Activated CD4-positive, alpha-beta T cell treated with anti-CD3 and anti-CD28 coated beads for 36 hours (primary cell): ENCODE measurements at regions of chr7 and their contacts with region 1.

Region 1: GRCh38 chr7:44123190-44124003 is at the start of gene POLD2:
- DNase-seq: peak; percentile 99
- ATAC-seq: peak; percentile 100
- H3K4me3 Mint-ChIP-seq: peak within 1 kb of the TSS; percentile 86
- H3K27ac Mint-ChIP-seq: peak within 1 kb of the TSS; percentile 89
- H3K4me1 Mint-ChIP-seq: peaks cover 42% of the 10 kb centered on the region
- H3K27me3 Mint-ChIP-seq: no peaks in the 10 kb centered on the region
- total RNA-seq, gene POLD2: 250 to 347 TPM

Region 2: GRCh38 chr7:44044315-44045225 is 78.8 kb before region 1 on chr7 and contains the start of gene DBNL:
- CTCF ChIA-PET with region 1: no interaction called
- POLR2A ChIA-PET with region 1: no interaction called
- intact Hi-C with region 1: loop called (anchors 1 to 2 kb)
- DNase-seq: peak; percentile 95
- ATAC-seq: peak; percentile 72
- H3K4me3 Mint-ChIP-seq: peak within 1 kb of the TSS; percentile 88
- H3K27ac Mint-ChIP-seq: peak within 1 kb of the TSS; percentile 93
- H3K4me1 Mint-ChIP-seq: peaks cover 52% of the 10 kb centered on the region
- H3K27me3 Mint-ChIP-seq: no peaks in the 10 kb centered on the region
- total RNA-seq, gene DBNL: 106 to 117 TPM

Region 3: DNA sequence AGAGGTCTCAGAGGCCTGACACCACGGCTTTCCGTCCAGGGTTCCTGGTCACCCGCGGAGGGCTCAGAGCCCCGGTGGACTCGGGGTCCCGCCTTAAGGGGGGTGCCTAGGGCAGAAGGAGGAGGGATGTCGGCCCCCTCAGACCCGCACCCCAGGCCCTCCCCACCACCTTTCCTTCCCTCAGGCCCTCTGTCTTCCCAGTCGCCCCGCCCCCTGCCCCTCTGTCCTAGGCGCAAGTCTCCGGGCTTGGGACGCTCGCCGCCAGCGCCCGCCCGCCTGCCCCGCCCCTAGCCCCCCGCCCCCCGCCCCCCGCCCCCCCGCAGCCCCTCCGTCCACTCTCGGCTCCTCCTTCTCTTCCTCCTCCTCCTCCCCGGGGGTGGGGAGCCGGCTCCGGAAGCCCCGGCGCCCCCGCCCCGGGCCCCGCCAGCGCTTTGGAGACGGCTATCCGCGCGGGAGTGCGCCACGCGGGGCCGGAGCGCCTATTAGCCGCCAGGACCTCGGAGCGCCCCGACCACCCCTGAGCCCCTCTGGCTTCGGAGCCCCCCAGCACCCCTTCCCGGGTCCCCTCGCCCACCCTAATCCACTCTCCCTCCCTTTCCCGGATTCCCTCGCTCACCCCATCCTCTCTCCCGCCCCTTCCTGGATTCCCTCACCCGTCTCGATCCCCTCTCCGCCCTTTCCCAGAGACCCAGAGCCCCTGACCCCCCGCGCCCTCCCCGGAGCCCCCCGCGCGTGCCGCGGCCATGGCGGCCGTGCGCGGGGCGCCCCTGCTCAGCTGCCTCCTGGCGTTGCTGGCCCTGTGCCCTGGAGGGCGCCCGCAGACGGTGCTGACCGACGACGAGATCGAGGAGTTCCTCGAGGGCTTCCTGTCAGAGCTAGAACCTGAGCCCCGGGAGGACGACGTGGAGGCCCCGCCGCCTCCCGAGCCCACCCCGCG is 19.2 kb before region 1 on chr7 and contains the start of gene AEBP1:
- CTCF ChIA-PET with region 1: interaction called, 5 read pairs
- POLR2A ChIA-PET with region 1: no interaction called
- intact Hi-C with region 1: loop called in 1 of 2 experiments (anchors 1 kb)
- DNase-seq: peak; percentile 59
- ATAC-seq: peak; percentile 68
- H3K4me3 Mint-ChIP-seq: peak within 1 kb of the TSS; percentile 76
- H3K27ac Mint-ChIP-seq: peak within 1 kb of the TSS; percentile 43
- H3K4me1 Mint-ChIP-seq: peaks cover 12% of the 10 kb centered on the region
- H3K27me3 Mint-ChIP-seq: peaks cover 4% of the 10 kb centered on the region
- total RNA-seq, gene AEBP1: 18.2 to 18.3 TPM

Region 4: DNA sequence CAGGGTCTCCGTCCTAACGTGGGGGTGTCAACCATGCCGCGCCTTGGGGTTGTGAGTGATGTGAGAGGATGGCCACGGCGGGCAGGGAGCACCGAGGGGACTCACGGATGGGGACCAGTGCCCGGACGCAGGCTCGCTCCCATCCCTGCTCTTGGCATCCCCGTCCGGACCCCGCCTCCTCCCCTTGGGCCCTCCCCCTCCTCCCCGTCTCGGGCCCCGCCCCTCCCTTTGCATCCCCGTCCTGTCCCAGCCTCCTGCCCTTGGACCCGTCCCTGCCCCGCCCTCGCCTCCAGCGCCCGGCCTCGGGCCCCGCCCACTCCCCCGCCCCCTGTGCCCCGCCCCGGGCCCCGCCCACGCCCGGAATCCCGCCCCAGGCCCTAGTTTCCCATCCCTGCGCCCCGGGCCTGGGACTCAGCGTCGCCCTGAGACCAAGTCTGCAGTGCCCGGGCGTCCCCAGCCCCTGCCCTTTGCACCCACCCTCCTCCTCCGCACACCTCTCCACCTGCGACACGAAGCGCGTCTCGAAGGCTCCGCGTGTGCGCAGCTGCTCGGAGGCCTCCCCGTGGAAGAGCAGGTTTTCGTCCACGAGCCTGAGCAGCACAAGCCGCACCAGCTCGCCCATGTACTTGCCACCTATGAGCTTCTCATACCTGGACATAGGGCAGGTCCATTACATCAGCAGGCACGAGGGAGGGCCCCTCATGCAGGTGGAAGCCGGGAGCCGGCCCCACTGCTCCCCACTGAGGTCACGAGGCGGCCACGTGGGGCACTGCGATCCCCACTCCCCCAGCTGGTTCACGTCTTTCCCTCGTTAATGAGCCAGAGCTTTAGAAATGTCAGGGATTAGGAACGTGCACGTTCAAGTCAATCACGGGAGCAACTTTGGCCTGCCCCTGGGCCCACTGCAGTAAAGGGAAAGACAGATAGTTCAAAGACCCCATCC is 22.8 kb after region 1 on chr7:
- CTCF ChIA-PET with region 1: no interaction called
- POLR2A ChIA-PET with region 1: no interaction called
- intact Hi-C with region 1: loop called (anchors 1 kb)
- DNase-seq: peak; percentile 86
- ATAC-seq: peak; percentile 91
- H3K4me3 Mint-ChIP-seq: peak overlapping the region; percentile 64
- H3K27ac Mint-ChIP-seq: no peak overlapping the region
- H3K4me1 Mint-ChIP-seq: peaks cover 6% of the 10 kb centered on the region
- H3K27me3 Mint-ChIP-seq: peaks cover 3% of the 10 kb centered on the region

Region 5: GRCh38 chr7:44200647-44201461 is 77.5 kb after region 1 on chr7 and contains the start of gene YKT6:
- CTCF ChIA-PET with region 1: interaction called, 5 read pairs
- POLR2A ChIA-PET with region 1: no interaction called
- intact Hi-C with region 1: loop called (anchors 1 kb)
- DNase-seq: peak; percentile 97
- ATAC-seq: peak; percentile 99
- H3K4me3 Mint-ChIP-seq: peak within 1 kb of the TSS; percentile 80
- H3K27ac Mint-ChIP-seq: peak within 1 kb of the TSS; percentile 75
- H3K4me1 Mint-ChIP-seq: peaks cover 26% of the 10 kb centered on the region
- H3K27me3 Mint-ChIP-seq: peaks cover 6% of the 10 kb centered on the region
- total RNA-seq, gene YKT6: 51.0 to 51.3 TPM

Region 6: GRCh38 chr7:44257618-44258422 is 134.4 kb after region 1 on chr7:
- CTCF ChIA-PET with region 1: no interaction called
- POLR2A ChIA-PET with region 1: no interaction called
- intact Hi-C with region 1: loop called in 1 of 2 experiments (anchors 1 kb)
- DNase-seq: peak; percentile 90
- ATAC-seq: peak; percentile 91
- H3K4me3 Mint-ChIP-seq: peak overlapping the region; percentile 30
- H3K27ac Mint-ChIP-seq: peak overlapping the region; percentile 90
- H3K4me1 Mint-ChIP-seq: peaks cover 46% of the 10 kb centered on the region
- H3K27me3 Mint-ChIP-seq: no peaks in the 10 kb centered on the region